Mammary epithelial cell (primary cell): ENCODE measurements at regions of chr15 and their contacts with region 1.

Region 1: GRCh38 chr15:69380100-69380727 is 33.9 kb upstream of the KIF23 start:
- DNase-seq: no peak
- H3K4me3 ChIP-seq: no peak overlapping the region
- H3K27ac ChIP-seq: no peak overlapping the region
- H3K4me1 ChIP-seq: no peaks in the 10 kb centered on the region
- H3K27me3 ChIP-seq: no peaks in the 10 kb centered on the region
- CTCF ChIP-seq: peak; percentile 16 to 30

Region 2: GRCh38 chr15:69346112-69346511 is 34.1 kb before region 1 on chr15:
- CTCF ChIA-PET with region 1: no interaction called
- dilution Hi-C with region 1: loop called (anchors 5 kb)
- in situ Hi-C with region 1: no loop called
- intact Hi-C with region 1: no loop called
- DNase-seq: no peak
- H3K4me3 ChIP-seq: no peak overlapping the region
- H3K27ac ChIP-seq: no peak overlapping the region
- H3K4me1 ChIP-seq: no peaks in the 10 kb centered on the region
- H3K27me3 ChIP-seq: no peaks in the 10 kb centered on the region
- CTCF ChIP-seq: no peak

Region 3: GRCh38 chr15:70008697-70009290 is 628.6 kb after region 1 on chr15:
- CTCF ChIA-PET with region 1: no interaction called
- dilution Hi-C with region 1: no loop called
- in situ Hi-C with region 1: no loop called
- intact Hi-C with region 1: no loop called
- DNase-seq: no peak
- H3K4me3 ChIP-seq: no peak overlapping the region
- H3K27ac ChIP-seq: no peak overlapping the region
- H3K4me1 ChIP-seq: no peaks in the 10 kb centered on the region
- H3K27me3 ChIP-seq: peaks cover 4% of the 10 kb centered on the region
- CTCF ChIP-seq: no peak